Dorsolateral prefrontal cortex (tissue), 120 donors: ENCODE measurements at regions of chr22 and their contacts with region 1.

Region 1: GRCh38 chr22:20418211-20418788 is 19.3 kb downstream of the SCARF2 start:
- DNase-seq: peak; percentile 69 to 87 (median 82)
- H3K4me3 ChIP-seq: peak overlapping the region; percentile 32 to 71 (median 55)
- H3K27ac ChIP-seq: peak overlapping the region in 51 of 59 donors; percentile 12 to 84 (median 71)
- H3K27me3 ChIP-seq: no peaks in the 10 kb centered on the region
- CTCF ChIP-seq: peak; percentile 81 to 98 (median 92)

Region 2: DNA sequence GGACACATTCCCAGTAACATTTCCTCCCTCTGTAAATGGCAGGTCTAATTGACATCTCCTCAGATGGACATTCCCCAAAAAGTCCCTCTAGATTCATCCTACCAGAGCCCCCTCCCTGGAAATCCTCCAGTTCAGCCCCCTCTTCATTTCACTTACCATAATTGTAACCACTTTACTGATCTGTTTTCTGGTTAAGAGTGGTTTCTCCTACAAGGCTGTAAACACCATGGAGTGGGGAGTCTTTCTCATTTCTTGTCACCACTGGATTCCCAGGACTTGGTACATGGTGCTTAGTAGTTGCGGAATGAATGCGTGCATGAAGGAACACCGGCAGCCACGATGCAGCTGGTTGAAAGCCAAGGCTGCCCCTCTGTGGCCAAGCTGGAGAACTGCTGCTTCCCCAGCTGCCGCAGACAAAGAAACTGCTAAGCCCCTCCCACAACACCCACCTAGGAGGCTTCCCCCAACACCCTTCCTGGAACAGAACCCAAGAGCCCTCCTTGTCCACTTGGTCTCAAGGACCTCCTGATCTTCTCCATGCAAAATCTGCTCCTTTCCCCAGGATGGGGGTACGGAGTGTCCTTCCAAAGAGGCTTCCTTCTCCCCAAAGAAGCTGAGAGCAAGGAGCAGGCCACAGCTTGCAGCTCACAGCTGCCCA is 37.9 kb after region 1 on chr22:
- intact Hi-C with region 1: loop called (anchors 1 to 2 kb)
- DNase-seq: peak; percentile 50 to 82 (median 74)
- H3K4me3 ChIP-seq: no peak overlapping the region
- H3K27ac ChIP-seq: peak overlapping the region in 1 of 59 donors; percentile 20
- H3K27me3 ChIP-seq: no peaks in the 10 kb centered on the region
- CTCF ChIP-seq: peak; percentile 46 to 95 (median 88)

Region 3: GRCh38 chr22:20495861-20496681 is 77.8 kb after region 1 on chr22:
- intact Hi-C with region 1: loop called (anchors 1 kb)
- DNase-seq: peak; percentile 77 to 97 (median 90)
- H3K4me3 ChIP-seq: peak overlapping the region; percentile 62 to 93 (median 83)
- H3K27ac ChIP-seq: peak overlapping the region; percentile 84 to 99 (median 97)
- H3K27me3 ChIP-seq: no peaks in the 10 kb centered on the region
- CTCF ChIP-seq: peak; percentile 69 to 95 (median 87)

Region 4: GRCh38 chr22:20568989-20569769 is 150.9 kb after region 1 on chr22:
- intact Hi-C with region 1: loop called in 1 of 2 experiments (anchors 5 kb)
- DNase-seq: peak in 7 of 10 donors; percentile 65 to 84 (median 77)
- H3K4me3 ChIP-seq: no peak overlapping the region
- H3K27ac ChIP-seq: peak overlapping the region in 32 of 59 donors; percentile 1 to 74 (median 36)
- H3K27me3 ChIP-seq: no peaks in the 10 kb centered on the region
- CTCF ChIP-seq: no peak